ENCODE measurements at regions of chr14 and their contacts with region 1.

Region 1: DNA sequence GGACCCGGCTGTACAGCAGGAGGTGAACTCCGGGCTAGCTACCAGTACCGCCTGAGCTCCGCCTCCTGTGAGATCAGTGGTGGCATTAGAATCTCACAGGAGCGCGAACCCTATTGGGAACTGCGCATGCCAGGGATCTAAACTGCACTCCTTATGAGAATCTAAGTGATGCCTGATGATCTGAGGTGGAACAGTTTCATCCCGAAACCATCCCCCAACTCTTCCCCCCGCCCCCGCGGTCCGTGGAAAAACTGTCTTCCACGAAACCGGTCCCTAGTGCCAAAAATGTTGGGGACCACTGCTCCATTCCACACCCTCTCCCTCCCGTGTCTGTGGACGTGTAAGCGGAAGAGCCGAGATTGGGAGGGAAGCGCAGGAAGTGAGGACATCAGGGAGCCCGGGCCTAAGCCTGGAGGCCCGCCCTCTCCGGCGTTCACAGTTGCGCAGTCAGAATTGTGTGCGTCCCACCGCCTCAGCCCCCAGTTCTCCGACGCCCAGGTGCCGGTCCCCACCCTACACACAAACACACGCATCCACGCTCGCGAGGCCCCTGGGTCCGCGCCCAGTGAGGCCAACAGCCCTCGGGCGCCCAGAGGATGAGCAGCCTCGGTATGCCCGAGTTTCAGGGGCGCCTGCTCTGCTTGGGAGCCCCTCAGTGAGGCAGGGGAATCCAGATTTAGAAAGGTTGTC is 1.8 kb upstream of the RNASE4 start:
- DNase-seq: peak; percentile 84 to 97 (median 92)

Region 2: DNA sequence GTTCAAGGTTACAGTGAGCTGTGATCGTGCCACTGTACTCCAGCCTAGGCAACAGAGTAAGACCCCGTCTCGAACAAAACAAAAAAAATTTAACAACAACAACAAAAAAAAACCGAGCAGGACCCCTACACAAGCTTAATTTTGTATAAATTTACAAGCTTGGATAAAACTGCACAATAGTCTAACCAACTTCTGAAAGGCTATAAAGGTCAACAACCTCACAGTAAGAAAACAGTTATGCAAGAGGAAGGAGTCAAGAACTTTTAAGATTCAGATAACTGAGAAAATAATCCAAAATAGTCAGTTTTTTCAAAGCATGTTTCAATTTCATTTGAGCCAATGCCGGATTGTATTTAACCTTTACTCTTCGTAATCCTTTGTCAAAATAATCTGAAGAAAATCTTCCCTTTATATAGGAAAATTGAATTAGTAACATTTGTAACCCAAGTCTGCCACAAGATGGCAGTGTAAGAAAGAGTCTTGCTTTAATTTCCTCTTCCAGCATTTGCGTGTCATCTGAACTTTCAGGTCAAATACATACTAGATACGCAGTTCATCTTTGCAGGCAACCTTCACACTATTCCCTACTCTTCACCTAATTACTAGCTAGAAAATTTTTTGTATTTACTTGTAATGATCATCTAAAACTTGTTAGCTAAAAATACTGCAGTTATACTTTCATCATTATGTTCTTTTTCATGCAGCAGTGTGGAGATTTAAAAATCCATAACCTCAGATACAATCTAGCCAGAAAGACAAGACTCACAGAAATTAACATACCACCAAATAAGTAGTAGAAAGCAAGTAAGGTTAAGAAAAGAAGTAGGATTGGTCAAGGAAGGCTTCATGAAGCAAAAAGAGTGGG is 355.3 kb before region 1 on chr14:
- intact Hi-C with region 1: loop called (anchors 5 kb)
- DNase-seq: peak in 11 of 42 donors; percentile 15 to 73 (median 45)

Region 3: DNA sequence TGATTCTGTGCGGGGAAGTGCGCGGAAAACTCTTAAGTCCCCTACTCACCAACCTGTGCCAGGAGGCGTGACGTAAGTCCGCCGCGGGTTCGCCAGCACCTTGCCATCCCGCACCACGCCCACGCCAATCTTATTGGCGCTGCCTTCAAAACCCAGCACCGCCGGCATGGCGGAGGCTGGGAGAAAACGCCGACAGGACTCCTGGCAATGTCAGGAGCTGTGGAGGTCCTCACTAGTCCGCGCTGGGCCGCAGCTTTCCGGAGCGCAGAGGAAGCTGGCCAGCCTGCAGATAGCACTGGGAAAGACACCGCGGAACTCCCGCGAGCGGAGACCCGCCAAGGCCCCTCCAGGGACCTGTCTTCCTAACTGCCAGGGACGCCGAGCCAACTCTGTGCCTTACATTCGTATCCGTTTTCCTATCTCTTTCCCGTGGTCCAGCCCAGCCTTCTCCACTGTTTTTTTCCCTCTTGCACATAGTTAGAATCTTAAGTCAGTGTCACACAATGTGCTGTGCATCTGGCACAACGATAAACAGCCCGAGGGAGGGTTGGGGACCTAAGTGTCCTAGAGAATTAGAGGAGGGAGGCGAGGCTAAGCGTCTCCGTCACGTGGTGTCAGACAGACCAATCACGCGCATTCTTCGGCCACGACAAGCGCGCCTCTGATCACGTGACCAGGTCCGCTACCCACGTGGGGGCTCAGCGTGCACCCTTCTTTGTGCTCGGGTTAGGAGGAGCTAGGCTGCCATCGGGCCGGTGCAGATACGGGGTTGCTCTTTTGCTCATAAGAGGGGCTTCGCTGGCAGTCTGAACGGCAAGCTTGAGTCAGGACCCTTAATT is 227.8 kb before region 1 on chr14 and contains the starts of genes APEX1 and OSGEP:
- intact Hi-C with region 1: loop called (anchors 10 kb)
- DNase-seq: peak; percentile 95 to 100 (median 99)

Region 4: GRCh38 chr14:20632682-20633428 is 49.7 kb before region 1 on chr14:
- intact Hi-C with region 1: loop called (anchors 5 kb)
- DNase-seq: peak in 26 of 42 donors; percentile 18 to 81 (median 50)

Region 5: GRCh38 chr14:20811986-20812975 is 129.7 kb after region 1 on chr14:
- intact Hi-C with region 1: no loop called
- DNase-seq: peak in 1 of 42 donors; percentile 36

Measured in head of caudate nucleus (tissue), 42 donors.